Heart left ventricle (tissue), 16 donors: ENCODE measurements at regions of chr5 and their contacts with region 1.

Region 1: GRCh38 chr5:14871210-14872069 is at the start of gene ANKH:
- DNase-seq: peak; percentile 87 to 90 (median 88)
- ATAC-seq: peak; percentile 52 to 93 (median 82)
- H3K4me3 ChIP-seq: peak within 1 kb of the TSS; percentile 75 to 97 (median 89)
- H3K27ac ChIP-seq: peak within 1 kb of the TSS; percentile 94 to 100 (median 98)
- H3K4me1 ChIP-seq: peaks cover 0 to 32% (median 17%) of the 10 kb centered on the region in 12 donors
- H3K27me3 ChIP-seq: peaks cover 0 to 4% (median 0%) of the 10 kb centered on the region in 9 donors
- CTCF ChIP-seq: peak in 2 of 12 donors; percentile 23 to 33
- POLR2A ChIP-seq: no peak
- total RNA-seq, gene ANKH: 87.1 to 260 (median 177) TPM

Region 2: GRCh38 chr5:13378083-13378482 is 1493.4 kb before region 1 on chr5:
- intact Hi-C with region 1: no loop called
- DNase-seq: no peak
- ATAC-seq: no peak
- H3K4me3 ChIP-seq: no peak overlapping the region
- H3K27ac ChIP-seq: no peak overlapping the region
- H3K4me1 ChIP-seq: no peaks in the 10 kb centered on the region
- H3K27me3 ChIP-seq: no peaks in the 10 kb centered on the region
- CTCF ChIP-seq: no peak
- POLR2A ChIP-seq: no peak

Region 3: GRCh38 chr5:14685757-14686156 is 185.7 kb before region 1 on chr5:
- intact Hi-C with region 1: loop called in 2 of 10 experiments (anchors 5 kb)
- DNase-seq: no peak
- ATAC-seq: peak; percentile 11 to 54 (median 43)
- H3K4me3 ChIP-seq: no peak overlapping the region
- H3K27ac ChIP-seq: peak overlapping the region in 10 of 12 donors; percentile 30 to 87 (median 75)
- H3K4me1 ChIP-seq: peaks cover 0 to 59% (median 23%) of the 10 kb centered on the region in 12 donors
- H3K27me3 ChIP-seq: no peaks in the 10 kb centered on the region
- CTCF ChIP-seq: peak; percentile 31 to 75 (median 58)
- POLR2A ChIP-seq: no peak

Region 4: GRCh38 chr5:14739538-14739937 is 131.9 kb before region 1 on chr5:
- intact Hi-C with region 1: loop called in 5 of 10 experiments (anchors 5 to 10 kb)
- DNase-seq: peak in 1 of 5 donors; percentile 60
- ATAC-seq: peak; percentile 38 to 72 (median 56)
- H3K4me3 ChIP-seq: no peak overlapping the region
- H3K27ac ChIP-seq: peak overlapping the region in 8 of 12 donors; percentile 27 to 78 (median 62)
- H3K4me1 ChIP-seq: peaks cover 0 to 59% (median 27%) of the 10 kb centered on the region in 12 donors
- H3K27me3 ChIP-seq: no peaks in the 10 kb centered on the region
- CTCF ChIP-seq: no peak
- POLR2A ChIP-seq: no peak

Region 5: GRCh38 chr5:14809369-14810155 is 61.9 kb before region 1 on chr5:
- intact Hi-C with region 1: loop called in 4 of 10 experiments (anchors 5 kb)
- DNase-seq: peak in 4 of 5 donors; percentile 57 to 78 (median 68)
- ATAC-seq: peak; percentile 25 to 80 (median 74)
- H3K4me3 ChIP-seq: peak overlapping the region in 3 of 12 donors; percentile 6 to 27 (median 12)
- H3K27ac ChIP-seq: peak overlapping the region in 11 of 12 donors; percentile 31 to 85 (median 60)
- H3K4me1 ChIP-seq: peaks cover 15 to 63% (median 42%) of the 10 kb centered on the region in 12 donors
- H3K27me3 ChIP-seq: no peaks in the 10 kb centered on the region
- CTCF ChIP-seq: no peak
- POLR2A ChIP-seq: no peak

Region 6: DNA sequence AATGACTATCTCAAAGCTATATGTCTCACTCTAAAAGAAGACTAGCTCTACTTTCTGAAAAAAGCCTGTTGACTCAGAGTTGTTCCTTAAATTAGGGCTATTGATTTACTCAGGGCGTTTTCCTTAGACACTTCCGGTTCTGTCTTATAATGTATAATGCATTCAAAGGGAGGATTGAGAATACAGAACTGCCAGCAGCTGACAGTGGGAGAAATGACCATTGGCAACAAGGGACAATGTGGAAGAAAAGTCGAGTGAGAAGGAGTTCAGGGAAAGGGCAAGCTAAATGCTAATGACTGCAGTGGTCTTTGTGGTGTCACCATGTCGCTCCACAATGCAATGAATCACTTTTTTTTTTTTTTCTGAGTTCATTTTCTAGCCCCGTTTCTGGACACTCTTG is 65.8 kb after region 1 on chr5:
- intact Hi-C with region 1: loop called in 4 of 10 experiments (anchors 5 to 10 kb)
- DNase-seq: peak in 1 of 5 donors; percentile 30
- ATAC-seq: peak in 3 of 4 donors; percentile 64 to 72 (median 69)
- H3K4me3 ChIP-seq: no peak overlapping the region
- H3K27ac ChIP-seq: peak overlapping the region in 7 of 12 donors; percentile 23 to 65 (median 48)
- H3K4me1 ChIP-seq: peaks cover 0 to 28% (median 2%) of the 10 kb centered on the region in 12 donors
- H3K27me3 ChIP-seq: no peaks in the 10 kb centered on the region
- CTCF ChIP-seq: no peak
- POLR2A ChIP-seq: no peak

Region 7: GRCh38 chr5:15003511-15003920 is 132.1 kb after region 1 on chr5:
- intact Hi-C with region 1: loop called (anchors 1 to 10 kb)
- DNase-seq: peak in 4 of 5 donors; percentile 65 to 71 (median 68)
- ATAC-seq: peak; percentile 72 to 89 (median 87)
- H3K4me3 ChIP-seq: no peak overlapping the region
- H3K27ac ChIP-seq: no peak overlapping the region
- H3K4me1 ChIP-seq: peaks cover 4 to 46% (median 34%) of the 10 kb centered on the region in 12 donors
- H3K27me3 ChIP-seq: no peaks in the 10 kb centered on the region
- CTCF ChIP-seq: peak; percentile 76 to 93 (median 86)
- POLR2A ChIP-seq: no peak